ENCODE measurements at regions of chr7 and their contacts with region 1.

Region 1: GRCh38 chr7:28853834-28854749 is 104.0 kb downstream of the TRIL start:
- DNase-seq: peak; percentile 55 to 84 (median 69)
- H3K4me3 ChIP-seq: peak overlapping the region; percentile 45
- H3K27ac ChIP-seq: no peak overlapping the region
- H3K4me1 ChIP-seq: no peaks in the 10 kb centered on the region
- H3K27me3 ChIP-seq: no peaks in the 10 kb centered on the region
- CTCF ChIP-seq: peak; percentile 66 to 87 (median 80)
- EP300 ChIP-seq: no peak
- POLR2A ChIP-seq: peak; percentile 10

Region 2: DNA sequence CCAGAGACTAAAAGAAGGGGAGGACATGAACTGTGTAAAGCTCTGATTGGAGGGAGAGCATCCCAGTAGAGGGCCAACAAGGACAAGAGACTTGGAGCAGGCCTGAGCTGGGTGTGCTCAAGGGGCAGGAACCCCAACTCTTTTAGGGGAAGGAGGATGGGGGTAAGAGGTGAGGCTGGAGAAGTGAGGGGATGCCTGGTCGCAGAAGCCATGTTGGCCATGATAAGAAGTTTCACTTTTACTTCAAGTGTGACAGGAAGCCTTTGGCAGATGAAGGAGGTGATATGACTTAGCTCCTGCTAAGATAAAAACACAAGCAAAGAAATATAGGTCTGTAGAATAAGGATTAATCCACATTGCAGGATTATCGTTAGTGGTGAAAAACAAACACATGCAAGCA is 881.8 kb before region 1 on chr7:
- intact Hi-C with region 1: loop called in 1 of 4 experiments (anchors 10 kb)
- DNase-seq: no peak
- H3K4me3 ChIP-seq: no peak overlapping the region
- H3K27ac ChIP-seq: no peak overlapping the region
- H3K4me1 ChIP-seq: no peaks in the 10 kb centered on the region
- H3K27me3 ChIP-seq: no peaks in the 10 kb centered on the region
- CTCF ChIP-seq: no peak
- EP300 ChIP-seq: no peak
- POLR2A ChIP-seq: no peak

Region 3: GRCh38 chr7:28298870-28299518 is 555.1 kb before region 1 on chr7:
- intact Hi-C with region 1: loop called in 1 of 4 experiments (anchors 10 kb)
- DNase-seq: peak in 2 of 5 donors; percentile 10 to 23
- H3K4me3 ChIP-seq: no peak overlapping the region
- H3K27ac ChIP-seq: no peak overlapping the region
- H3K4me1 ChIP-seq: no peaks in the 10 kb centered on the region
- H3K27me3 ChIP-seq: no peaks in the 10 kb centered on the region
- CTCF ChIP-seq: no peak
- EP300 ChIP-seq: no peak
- POLR2A ChIP-seq: no peak

Region 4: GRCh38 chr7:28389504-28390395 is 464.3 kb before region 1 on chr7:
- intact Hi-C with region 1: loop called in 3 of 4 experiments (anchors 5 kb)
- DNase-seq: no peak
- H3K4me3 ChIP-seq: peak overlapping the region; percentile 2
- H3K27ac ChIP-seq: no peak overlapping the region
- H3K4me1 ChIP-seq: no peaks in the 10 kb centered on the region
- H3K27me3 ChIP-seq: no peaks in the 10 kb centered on the region
- CTCF ChIP-seq: peak in 2 of 3 donors; percentile 44 to 47
- EP300 ChIP-seq: no peak
- POLR2A ChIP-seq: no peak

Region 5: GRCh38 chr7:28573059-28573553 is 281.0 kb before region 1 on chr7:
- intact Hi-C with region 1: no loop called
- DNase-seq: no peak
- H3K4me3 ChIP-seq: no peak overlapping the region
- H3K27ac ChIP-seq: no peak overlapping the region
- H3K4me1 ChIP-seq: no peaks in the 10 kb centered on the region
- H3K27me3 ChIP-seq: no peaks in the 10 kb centered on the region
- CTCF ChIP-seq: no peak
- EP300 ChIP-seq: no peak
- POLR2A ChIP-seq: no peak

Region 6: DNA sequence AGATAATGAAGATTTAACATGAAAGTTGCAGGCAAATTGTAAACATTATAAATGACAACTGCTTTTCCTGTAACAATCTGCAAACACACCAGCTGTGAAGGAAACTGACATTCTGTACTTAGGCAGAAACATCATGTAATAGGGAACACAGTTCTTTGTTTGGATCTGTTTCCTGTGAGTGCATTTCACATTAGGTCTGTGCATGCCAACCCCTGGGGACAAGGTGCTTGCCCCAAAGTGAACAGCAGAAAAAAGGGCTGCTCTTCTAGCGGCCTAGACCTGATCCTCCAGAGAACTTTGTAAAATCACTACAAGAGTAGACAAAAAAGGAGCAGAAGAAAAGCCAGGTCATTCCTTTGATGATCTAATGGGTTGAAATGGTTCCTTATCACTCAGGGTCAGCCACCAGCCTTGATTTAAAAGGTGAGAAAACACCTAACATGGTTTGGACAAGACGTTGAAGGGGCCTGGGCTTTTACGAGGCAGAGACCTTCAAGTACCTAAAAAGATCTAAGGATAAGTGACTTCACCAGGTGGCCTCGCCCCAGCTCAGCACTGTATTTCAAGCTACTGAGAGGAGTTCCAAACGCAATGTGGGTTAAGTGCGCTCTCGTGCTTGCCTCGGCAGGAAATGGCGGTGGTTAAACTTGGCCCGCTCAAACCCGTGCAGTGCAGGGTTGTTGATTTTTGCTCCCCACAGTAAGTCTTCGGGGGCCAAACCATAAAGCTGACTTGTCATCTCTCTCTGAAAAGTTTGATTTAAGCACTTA is 192.1 kb before region 1 on chr7:
- intact Hi-C with region 1: no loop called
- DNase-seq: no peak
- H3K4me3 ChIP-seq: no peak overlapping the region
- H3K27ac ChIP-seq: no peak overlapping the region
- H3K4me1 ChIP-seq: no peaks in the 10 kb centered on the region
- H3K27me3 ChIP-seq: no peaks in the 10 kb centered on the region
- CTCF ChIP-seq: no peak
- EP300 ChIP-seq: no peak
- POLR2A ChIP-seq: no peak

Region 7: DNA sequence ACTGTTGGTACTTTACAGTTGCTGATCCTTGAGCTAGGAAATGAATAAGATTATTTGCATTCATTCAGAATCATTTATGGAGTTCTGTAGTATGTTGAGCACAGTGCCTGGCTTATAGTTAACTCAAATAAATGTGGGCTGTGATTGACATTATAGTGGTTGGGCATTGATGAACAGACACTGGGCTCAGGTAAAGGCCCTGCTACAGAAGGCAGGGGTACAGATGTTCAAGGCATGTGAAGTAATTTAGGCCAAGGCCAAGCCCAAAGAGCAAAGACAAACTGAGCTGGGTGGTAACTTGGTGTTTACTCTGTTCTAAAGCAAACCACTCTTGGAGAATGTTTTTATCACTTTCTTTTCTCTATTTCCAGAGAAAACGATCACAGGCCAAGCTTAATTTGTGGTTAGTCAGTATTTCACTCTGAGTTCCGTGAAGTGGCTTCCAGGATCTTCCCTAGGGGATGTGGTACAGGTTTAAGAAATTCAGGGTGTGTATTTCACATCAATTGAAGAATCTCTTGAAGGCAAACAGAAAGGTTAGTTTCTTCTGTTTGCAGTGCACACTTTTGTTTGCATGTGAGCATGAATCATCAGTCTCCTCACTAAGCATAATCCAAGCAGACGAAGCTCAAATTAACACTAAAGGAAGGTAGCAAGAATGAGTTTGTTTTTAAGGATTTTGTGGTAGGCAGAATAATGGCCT is 595.6 kb after region 1 on chr7:
- intact Hi-C with region 1: no loop called
- DNase-seq: no peak
- H3K4me3 ChIP-seq: no peak overlapping the region
- H3K27ac ChIP-seq: peak overlapping the region in 1 of 2 donors; percentile 49
- H3K4me1 ChIP-seq: peaks cover 14% of the 10 kb centered on the region
- H3K27me3 ChIP-seq: no peaks in the 10 kb centered on the region
- CTCF ChIP-seq: no peak
- EP300 ChIP-seq: no peak
- POLR2A ChIP-seq: no peak

Measured in ovary (tissue), 10 donors.